ENCODE measurements at regions of chr18 and their contacts with region 1.

Region 1: GRCh38 chr18:58043491-58044379 is at the start of gene NEDD4L:
- DNase-seq: peak; percentile 91
- H3K4me3 Mint-ChIP-seq: peak within 1 kb of the TSS; percentile 90
- H3K27ac Mint-ChIP-seq: peak within 1 kb of the TSS; percentile 60
- H3K4me1 Mint-ChIP-seq: peaks cover 21% of the 10 kb centered on the region
- H3K27me3 Mint-ChIP-seq: peaks cover 60% of the 10 kb centered on the region
- total RNA-seq, gene NEDD4L: 3.5 and 4.2 TPM in 2 replicates

Region 2: GRCh38 chr18:57621246-57621604 is 422.5 kb before region 1 on chr18:
- intact Hi-C with region 1: loop called (anchors 2 kb)
- DNase-seq: no peak
- H3K4me3 Mint-ChIP-seq: peak overlapping the region; percentile 92
- H3K27ac Mint-ChIP-seq: peak overlapping the region; percentile 94
- H3K4me1 Mint-ChIP-seq: peaks cover 23% of the 10 kb centered on the region
- H3K27me3 Mint-ChIP-seq: no peaks in the 10 kb centered on the region

Region 3: GRCh38 chr18:57975805-57976204 is 67.9 kb before region 1 on chr18:
- intact Hi-C with region 1: no loop called
- DNase-seq: no peak
- H3K4me3 Mint-ChIP-seq: no peak overlapping the region
- H3K27ac Mint-ChIP-seq: no peak overlapping the region
- H3K4me1 Mint-ChIP-seq: no peaks in the 10 kb centered on the region
- H3K27me3 Mint-ChIP-seq: peaks cover 11% of the 10 kb centered on the region

Region 4: GRCh38 chr18:58117786-58118403 is 74.2 kb after region 1 on chr18:
- intact Hi-C with region 1: loop called (anchors 1 kb)
- DNase-seq: no peak
- H3K4me3 Mint-ChIP-seq: no peak overlapping the region
- H3K27ac Mint-ChIP-seq: no peak overlapping the region
- H3K4me1 Mint-ChIP-seq: peaks cover 9% of the 10 kb centered on the region
- H3K27me3 Mint-ChIP-seq: peaks cover 3% of the 10 kb centered on the region

Region 5: GRCh38 chr18:58180738-58181353 is 137.1 kb after region 1 on chr18:
- intact Hi-C with region 1: loop called (anchors 1 kb)
- DNase-seq: peak; percentile 82
- H3K4me3 Mint-ChIP-seq: no peak overlapping the region
- H3K27ac Mint-ChIP-seq: no peak overlapping the region
- H3K4me1 Mint-ChIP-seq: no peaks in the 10 kb centered on the region
- H3K27me3 Mint-ChIP-seq: peaks cover 10% of the 10 kb centered on the region

Measured in activated CD4-positive, alpha-beta T cell treated with anti-CD3 and anti-CD28 coated beads, Interleukin-2, amount 10 ng/mL, durations not matched to agents 24 days and 14 days (primary cell).